Calu3 (cell line): ENCODE measurements at regions of chr4 and their contacts with region 1.

Region 1: DNA sequence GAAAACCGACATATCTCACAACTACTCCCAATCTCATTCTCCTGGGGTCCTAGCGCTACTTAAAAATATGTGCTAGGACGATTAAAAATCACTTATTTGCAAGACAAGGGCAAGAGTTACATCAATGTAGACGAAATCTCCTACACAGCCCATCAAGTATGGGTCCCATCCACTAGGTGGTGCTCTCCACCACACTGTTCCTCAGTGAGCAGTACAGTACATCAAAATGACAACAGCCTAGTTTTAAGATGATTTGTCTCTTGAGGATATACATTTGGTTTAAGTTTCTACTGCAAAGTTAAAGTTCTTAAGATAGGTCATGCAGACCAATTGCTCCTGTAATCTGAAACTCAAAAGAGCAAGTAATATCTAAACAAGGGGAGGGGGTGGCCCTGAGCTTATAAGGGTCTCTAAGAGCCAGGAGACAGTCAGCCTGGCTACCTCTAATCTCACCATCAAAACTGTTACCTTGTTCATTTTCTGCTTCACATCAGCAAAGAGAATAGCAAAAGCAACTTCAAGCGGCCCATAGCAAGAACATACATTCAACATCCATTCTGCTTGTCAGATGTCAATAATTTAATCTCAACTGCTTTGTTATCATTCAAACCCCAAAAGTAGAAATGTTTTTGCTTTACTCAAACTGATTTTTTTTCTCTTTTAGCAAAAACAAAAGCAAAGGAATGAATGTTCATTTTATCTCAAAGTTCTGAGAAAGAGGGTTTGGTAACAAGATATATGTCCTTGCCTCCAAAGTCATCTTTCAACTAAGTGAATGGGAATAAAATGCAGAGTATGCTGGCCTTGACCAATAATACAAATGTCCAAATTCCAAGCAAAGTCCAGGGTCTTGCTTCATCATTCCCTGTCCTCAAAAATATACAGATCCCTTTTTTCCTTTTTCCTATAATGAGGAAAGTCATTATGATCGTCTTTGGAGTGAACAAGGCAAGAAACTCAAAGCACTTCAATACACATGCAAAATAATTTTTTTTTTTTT is 53.1 kb downstream of the STX18 start:
- DNase-seq: peak; percentile 71
- H3K4me3 Mint-ChIP-seq: no peak overlapping the region
- H3K27ac Mint-ChIP-seq: no peak overlapping the region
- H3K4me1 Mint-ChIP-seq: no peaks in the 10 kb centered on the region
- H3K27me3 Mint-ChIP-seq: no peaks in the 10 kb centered on the region
- CTCF ChIP-seq: no peak

Region 2: GRCh38 chr4:4499438-4500123 is 10.9 kb after region 1 on chr4:
- CTCF ChIA-PET with region 1: interaction called, 6 read pairs
- intact Hi-C with region 1: loop called (anchors 1 kb)
- DNase-seq: no peak
- H3K4me3 Mint-ChIP-seq: peak overlapping the region; percentile 53
- H3K27ac Mint-ChIP-seq: peak overlapping the region; percentile 50
- H3K4me1 Mint-ChIP-seq: peaks cover 27% of the 10 kb centered on the region
- H3K27me3 Mint-ChIP-seq: no peaks in the 10 kb centered on the region
- CTCF ChIP-seq: no peak

Region 3: DNA sequence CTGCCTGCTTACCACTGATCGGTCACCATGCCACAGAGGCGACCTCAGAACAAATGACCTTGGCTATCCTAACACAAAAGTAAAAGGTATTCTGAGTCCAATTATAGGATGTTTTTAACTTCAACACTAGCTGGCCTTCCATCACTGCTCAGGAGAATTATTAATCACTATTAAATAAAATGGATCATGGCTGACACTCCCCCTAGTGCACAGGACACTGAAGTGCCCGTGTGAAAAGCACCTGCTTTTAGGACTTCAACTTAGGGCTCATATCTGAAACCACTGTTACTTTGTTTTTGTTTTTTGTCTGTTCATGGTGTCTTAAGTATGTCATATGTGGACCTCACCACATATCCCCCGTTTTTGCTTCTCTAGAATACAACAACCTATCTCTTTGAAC is 19.2 kb after region 1 on chr4:
- CTCF ChIA-PET with region 1: interaction called, 3 read pairs
- intact Hi-C with region 1: loop called (anchors 1 kb)
- DNase-seq: peak; percentile 15
- H3K4me3 Mint-ChIP-seq: no peak overlapping the region
- H3K27ac Mint-ChIP-seq: no peak overlapping the region
- H3K4me1 Mint-ChIP-seq: no peaks in the 10 kb centered on the region
- H3K27me3 Mint-ChIP-seq: no peaks in the 10 kb centered on the region
- CTCF ChIP-seq: peak; percentile 50

Region 4: GRCh38 chr4:4880492-4880891 is 391.8 kb after region 1 on chr4:
- CTCF ChIA-PET with region 1: interaction called, 4 read pairs
- intact Hi-C with region 1: loop called (anchors 5 kb)
- DNase-seq: no peak
- H3K4me3 Mint-ChIP-seq: no peak overlapping the region
- H3K27ac Mint-ChIP-seq: no peak overlapping the region
- H3K4me1 Mint-ChIP-seq: no peaks in the 10 kb centered on the region
- H3K27me3 Mint-ChIP-seq: no peaks in the 10 kb centered on the region
- CTCF ChIP-seq: no peak